Activated CD4-positive, alpha-beta T cell treated with anti-CD3 and anti-CD28 coated beads for 36 hours (primary cell): ENCODE measurements at regions of chr3 and their contacts with region 1.

Region 1: DNA sequence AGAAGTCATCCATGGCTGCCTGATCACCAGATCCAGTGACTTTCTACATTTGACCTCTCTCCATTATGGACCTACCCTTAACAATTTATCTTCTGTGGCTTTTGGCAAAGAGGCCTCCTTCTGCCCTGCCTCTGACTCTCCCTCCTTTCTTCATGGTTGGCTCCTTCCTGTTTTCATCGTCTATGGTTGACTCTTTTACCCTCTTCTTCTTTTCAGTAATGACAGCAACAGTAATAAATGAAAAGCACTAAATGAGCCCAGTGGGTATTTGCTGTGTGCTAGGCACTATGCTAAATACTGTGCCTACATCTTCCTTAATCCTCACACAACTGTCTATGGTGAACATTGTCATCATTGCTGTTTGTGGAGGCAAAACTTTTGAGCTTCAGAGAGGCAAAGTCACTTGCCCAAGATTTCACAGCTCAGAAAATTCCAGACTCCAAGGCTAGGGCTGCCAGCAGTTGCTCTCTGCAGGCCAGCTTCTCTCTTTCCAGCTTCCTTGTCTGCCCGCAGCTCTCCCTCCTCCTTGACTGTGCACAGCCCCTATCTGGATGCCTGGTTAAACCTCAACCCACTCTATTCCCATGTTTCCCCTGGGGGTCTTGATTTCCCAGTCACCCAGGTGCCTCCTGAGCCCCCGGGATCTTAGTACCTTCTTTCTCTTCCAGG is 24.6 kb downstream of the ITPR1 start:
- DNase-seq: no peak
- ATAC-seq: peak; percentile 28
- H3K4me3 Mint-ChIP-seq: no peak overlapping the region
- H3K27ac Mint-ChIP-seq: peak overlapping the region; percentile 82
- H3K4me1 Mint-ChIP-seq: peaks cover 35% of the 10 kb centered on the region
- H3K27me3 Mint-ChIP-seq: no peaks in the 10 kb centered on the region

Region 2: GRCh38 chr3:4504340-4505261 is 13.2 kb before region 1 on chr3:
- CTCF ChIA-PET with region 1: interaction called, 28 read pairs
- POLR2A ChIA-PET with region 1: interaction called, 4 read pairs
- intact Hi-C with region 1: no loop called
- DNase-seq: peak; percentile 51
- ATAC-seq: peak; percentile 81
- H3K4me3 Mint-ChIP-seq: peak overlapping the region; percentile 72
- H3K27ac Mint-ChIP-seq: peak overlapping the region; percentile 95
- H3K4me1 Mint-ChIP-seq: peaks cover 54% of the 10 kb centered on the region
- H3K27me3 Mint-ChIP-seq: no peaks in the 10 kb centered on the region

Region 3: GRCh38 chr3:4584456-4585249 is 66.9 kb after region 1 on chr3:
- CTCF ChIA-PET with region 1: interaction called, 3 read pairs
- POLR2A ChIA-PET with region 1: interaction called, 3 read pairs
- intact Hi-C with region 1: loop called in 1 of 2 experiments (anchors 5 kb)
- DNase-seq: peak; percentile 46
- ATAC-seq: peak; percentile 75
- H3K4me3 Mint-ChIP-seq: peak overlapping the region; percentile 74
- H3K27ac Mint-ChIP-seq: peak overlapping the region; percentile 87
- H3K4me1 Mint-ChIP-seq: peaks cover 76% of the 10 kb centered on the region
- H3K27me3 Mint-ChIP-seq: no peaks in the 10 kb centered on the region